Heart right ventricle (tissue), 16 donors: ENCODE measurements at regions of chr2 and their contacts with region 1.

Region 1: GRCh38 chr2:96509114-96509846 is 4.1 kb upstream of the NEURL3 start:
- DNase-seq: peak; percentile 88 to 90
- ATAC-seq: peak; percentile 88 to 94 (median 92)
- H3K4me3 ChIP-seq: no peak overlapping the region
- H3K27ac ChIP-seq: peak overlapping the region in 1 of 10 donors; percentile 5
- H3K4me1 ChIP-seq: peaks cover 5 to 29% (median 15%) of the 10 kb centered on the region in 9 donors
- H3K27me3 ChIP-seq: no peaks in the 10 kb centered on the region
- CTCF ChIP-seq: peak; percentile 95 to 100 (median 98)

Region 2: DNA sequence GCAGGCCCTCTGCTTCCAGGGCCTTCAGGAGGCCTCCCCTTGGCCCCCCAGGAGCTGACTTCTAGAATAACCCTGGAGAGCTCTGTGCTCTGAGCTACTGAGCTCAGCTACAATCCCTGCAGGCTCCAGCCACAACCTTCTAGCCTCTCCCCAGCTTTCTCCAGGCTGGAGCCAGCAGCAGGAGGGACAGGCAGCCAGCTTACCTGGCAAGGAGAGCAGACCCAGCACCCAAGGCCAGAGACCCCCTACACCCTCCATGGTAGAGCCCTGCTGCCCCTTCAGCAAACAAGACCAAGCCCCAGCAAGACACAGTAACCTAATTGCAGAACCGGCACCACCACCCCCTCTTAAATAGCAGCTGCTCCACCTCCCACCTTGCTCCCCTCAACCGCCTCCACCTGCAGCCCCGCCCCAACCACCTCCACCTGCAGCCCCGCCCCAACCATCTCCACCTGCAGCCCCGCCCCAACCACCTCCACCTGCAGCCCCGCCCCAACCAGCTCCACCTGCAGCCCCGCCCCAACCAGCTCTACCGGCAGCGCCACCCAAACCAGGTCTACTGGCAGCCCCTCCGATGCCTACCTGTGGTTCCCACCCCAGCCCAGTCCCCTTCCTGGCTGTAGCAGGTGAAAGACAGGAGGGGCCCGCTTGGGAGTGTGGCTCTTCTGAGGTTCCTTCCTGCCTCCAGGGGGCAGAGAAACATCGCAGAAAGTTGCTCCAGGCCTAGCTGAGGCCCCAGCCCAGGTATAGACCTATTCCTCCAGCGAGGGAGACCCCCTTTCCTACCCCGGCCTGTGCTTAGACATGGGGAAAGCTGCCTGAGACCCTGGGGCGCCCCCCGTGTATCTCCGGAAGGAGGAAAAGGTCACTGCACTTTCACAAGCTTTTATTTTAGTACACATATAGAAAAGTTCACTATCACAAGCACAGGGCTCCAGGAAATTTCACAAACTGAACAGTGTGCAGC is 370.8 kb before region 1 on chr2 and contains the start of gene ASTL:
- intact Hi-C with region 1: loop called in 5 of 10 experiments (anchors 5 to 10 kb)
- DNase-seq: peak in 1 of 2 donors; percentile 32
- ATAC-seq: peak in 7 of 8 donors; percentile 35 to 72 (median 62)
- H3K4me3 ChIP-seq: no peak within 1 kb of the TSS
- H3K27ac ChIP-seq: no peak within 1 kb of the TSS
- H3K4me1 ChIP-seq: peaks cover 0 to 8% (median 0%) of the 10 kb centered on the region in 9 donors
- H3K27me3 ChIP-seq: peaks cover 0 to 14% (median 0%) of the 10 kb centered on the region in 7 donors
- CTCF ChIP-seq: peak; percentile 11 to 63 (median 52)
- total RNA-seq, gene ASTL: not detected

Region 3: GRCh38 chr2:96305091-96305978 is 203.9 kb before region 1 on chr2 and contains the start of gene SNRNP200:
- intact Hi-C with region 1: loop called in 7 of 10 experiments (anchors 1 to 10 kb)
- DNase-seq: peak; percentile 88 to 89
- ATAC-seq: peak; percentile 97 to 100 (median 99)
- H3K4me3 ChIP-seq: peak within 1 kb of the TSS; percentile 57 to 94 (median 74)
- H3K27ac ChIP-seq: peak within 1 kb of the TSS; percentile 5 to 96 (median 86)
- H3K4me1 ChIP-seq: peaks cover 6 to 40% (median 24%) of the 10 kb centered on the region in 9 donors
- H3K27me3 ChIP-seq: no peaks in the 10 kb centered on the region
- CTCF ChIP-seq: no peak
- total RNA-seq, gene SNRNP200: 56.2 to 70.5 (median 63.6) TPM

Region 4: DNA sequence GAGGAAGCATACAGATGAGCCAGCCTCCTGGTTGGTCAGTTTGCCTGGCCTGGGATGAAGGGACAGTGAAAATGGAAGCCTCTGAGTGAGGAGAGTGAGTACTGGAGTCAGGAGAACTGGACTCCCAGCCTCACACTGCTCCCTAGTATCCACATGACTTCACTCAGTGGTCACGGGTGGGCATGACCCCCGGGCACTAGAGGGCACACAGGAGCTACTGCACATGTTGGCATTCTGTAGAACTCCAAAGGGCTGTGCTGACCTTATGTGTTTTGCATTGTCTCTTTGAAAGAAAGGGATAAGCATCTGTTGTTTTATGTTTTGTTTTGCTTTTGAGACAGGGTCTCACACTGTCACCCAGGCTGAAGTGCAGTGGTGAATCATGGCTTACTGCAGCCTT is 150.0 kb before region 1 on chr2:
- intact Hi-C with region 1: loop called in 1 of 10 experiments (anchors 2 kb)
- DNase-seq: peak in 1 of 2 donors; percentile 30
- ATAC-seq: peak in 2 of 8 donors; percentile 45 to 66
- H3K4me3 ChIP-seq: no peak overlapping the region
- H3K27ac ChIP-seq: no peak overlapping the region
- H3K4me1 ChIP-seq: peaks cover 0 to 14% (median 3%) of the 10 kb centered on the region in 9 donors
- H3K27me3 ChIP-seq: no peaks in the 10 kb centered on the region
- CTCF ChIP-seq: peak in 7 of 9 donors; percentile 20 to 51 (median 39)

Region 5: GRCh38 chr2:96389736-96390135 is 119.5 kb before region 1 on chr2:
- intact Hi-C with region 1: no loop called
- DNase-seq: no peak
- ATAC-seq: no peak
- H3K4me3 ChIP-seq: no peak overlapping the region
- H3K27ac ChIP-seq: no peak overlapping the region
- H3K4me1 ChIP-seq: peaks cover 0 to 14% (median 0%) of the 10 kb centered on the region in 9 donors
- H3K27me3 ChIP-seq: no peaks in the 10 kb centered on the region
- CTCF ChIP-seq: no peak

Region 6: GRCh38 chr2:96470636-96471035 is 38.6 kb before region 1 on chr2:
- intact Hi-C with region 1: loop called in 6 of 10 experiments (anchors 1 to 5 kb)
- DNase-seq: peak; percentile 61 to 75
- ATAC-seq: peak; percentile 76 to 93 (median 86)
- H3K4me3 ChIP-seq: peak overlapping the region in 8 of 10 donors; percentile 13 to 45 (median 38)
- H3K27ac ChIP-seq: peak overlapping the region in 1 of 10 donors; percentile 19
- H3K4me1 ChIP-seq: peaks cover 0 to 12% (median 7%) of the 10 kb centered on the region in 9 donors
- H3K27me3 ChIP-seq: peaks cover 0 to 9% (median 0%) of the 10 kb centered on the region in 7 donors
- CTCF ChIP-seq: peak; percentile 38 to 78 (median 69)